GM13977 (cell line): ENCODE measurements at regions of chr17 and their contacts with region 1.

Region 1: DNA sequence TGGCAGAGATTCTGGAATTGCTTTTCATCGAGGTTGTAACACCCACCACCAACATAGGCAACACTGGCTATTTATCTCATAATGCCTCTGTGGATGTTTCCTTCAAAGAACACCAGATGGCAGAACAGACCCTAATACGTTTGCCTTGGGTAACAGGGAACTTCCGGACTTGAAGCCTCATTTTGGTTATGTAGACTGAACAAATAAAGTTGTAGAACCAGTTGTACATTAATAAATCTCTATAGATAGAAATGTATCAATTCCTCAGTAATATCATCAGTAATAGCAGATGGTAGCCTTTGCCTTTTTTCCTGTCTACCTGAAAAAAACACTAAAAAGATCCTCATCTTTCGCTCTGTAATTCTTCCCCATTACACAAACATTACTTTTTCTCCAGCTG is 25.9 kb upstream of the APOH start:
- DNase-seq: peak; percentile 31
- CTCF ChIP-seq: peak; percentile 33

Region 2: DNA sequence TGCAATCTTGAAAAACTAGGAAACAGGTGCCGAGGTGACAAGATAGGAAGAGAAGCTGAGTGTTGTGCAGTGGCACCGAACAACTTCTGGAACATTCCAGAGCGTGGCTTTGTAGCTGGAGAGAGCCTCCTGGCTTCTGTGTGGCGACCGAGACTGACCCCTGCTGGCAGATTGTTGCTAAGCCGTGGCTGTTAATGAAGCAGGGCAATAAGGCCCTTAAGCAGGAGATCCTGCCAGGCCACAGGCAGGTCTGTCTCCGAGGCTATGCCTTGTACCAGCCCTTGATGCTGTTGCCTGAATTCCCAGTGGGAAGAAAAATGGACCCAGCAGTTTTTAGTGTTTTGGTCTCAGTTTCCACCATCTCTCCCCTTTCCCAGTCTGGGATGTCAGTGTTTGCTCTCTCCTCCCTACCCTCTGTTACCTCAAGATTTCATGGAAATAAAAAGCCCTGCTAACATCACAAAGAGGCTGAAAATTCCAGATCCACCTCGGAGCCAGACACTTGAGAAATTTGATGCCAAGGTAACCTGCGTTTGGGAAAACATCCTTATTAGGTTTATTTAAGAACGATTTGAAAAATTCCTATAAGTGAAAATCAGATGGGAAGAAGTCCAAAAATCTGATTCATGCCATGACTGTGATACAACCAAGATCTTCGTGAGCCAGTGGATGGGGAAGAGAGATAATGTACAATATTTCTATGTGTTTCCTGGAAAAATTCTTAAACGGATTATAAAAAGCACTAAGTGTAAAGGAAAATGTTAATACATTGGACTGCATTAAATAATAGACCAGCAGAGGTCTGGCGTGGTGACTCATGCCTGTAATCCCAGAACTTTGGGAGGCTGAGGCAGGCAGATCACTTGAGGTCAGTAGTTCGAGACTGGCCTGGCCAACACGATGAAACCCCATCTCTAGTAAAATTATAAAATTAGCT is 312.4 kb after region 1 on chr17:
- in situ Hi-C with region 1: loop called (anchors 25 kb)
- DNase-seq: peak; percentile 59
- CTCF ChIP-seq: peak; percentile 80